Pancreas (tissue), 10 donors: ENCODE measurements at regions of chr17 and their contacts with region 1.

Region 1: GRCh38 chr17:78176548-78177025 is 8.2 kb downstream of the SYNGR2 start:
- DNase-seq: peak; percentile 63 to 89 (median 82)
- ATAC-seq: peak; percentile 22 to 44 (median 42)
- H3K4me3 ChIP-seq: no peak overlapping the region
- H3K27ac ChIP-seq: peak overlapping the region in 2 of 4 donors; percentile 83 to 86
- H3K4me1 ChIP-seq: peaks cover 20 to 56% (median 36%) of the 10 kb centered on the region in 3 donors
- H3K27me3 ChIP-seq: no peaks in the 10 kb centered on the region
- CTCF ChIP-seq: peak; percentile 73 to 92 (median 85)

Region 2: DNA sequence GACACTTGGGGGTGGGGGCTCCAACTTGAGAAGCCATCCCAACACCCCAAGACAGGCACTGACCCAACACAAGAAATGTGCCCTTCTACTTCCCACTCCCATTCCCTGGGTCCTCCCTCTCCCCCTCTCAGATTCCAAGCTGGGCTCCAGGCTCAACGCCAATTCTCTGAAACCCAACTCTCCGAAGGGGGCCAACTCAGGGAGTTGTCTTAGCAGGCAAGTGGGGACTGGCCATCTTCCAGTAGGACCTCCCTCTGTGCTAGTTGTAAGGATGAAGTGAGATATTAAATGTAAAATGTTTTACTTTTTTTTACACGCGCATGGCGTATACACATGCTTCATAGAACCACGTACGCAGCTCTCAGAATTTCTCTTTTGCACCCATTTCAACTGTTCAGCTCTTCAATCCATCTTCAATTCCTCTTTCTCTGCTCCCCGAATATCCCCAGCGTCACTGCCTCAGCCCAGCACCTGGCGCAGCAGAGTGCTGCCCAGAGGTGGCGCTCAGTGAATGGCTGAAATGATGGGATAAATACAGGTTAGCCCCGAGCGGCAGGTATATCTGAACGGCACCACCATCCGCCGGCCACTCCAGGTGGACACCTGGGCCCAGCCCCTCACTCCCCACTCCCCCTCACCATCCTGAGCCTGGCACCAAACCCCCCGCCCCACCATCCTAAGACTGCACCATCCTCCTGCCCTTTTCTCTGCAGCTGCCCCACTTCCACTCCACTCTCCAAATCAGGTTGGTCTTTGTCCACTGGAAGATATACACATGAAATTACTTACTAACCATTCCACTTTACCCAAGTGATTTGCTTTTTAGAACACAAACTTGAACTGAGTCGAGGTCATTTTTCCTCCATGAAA is 262.0 kb before region 1 on chr17:
- intact Hi-C with region 1: no loop called
- DNase-seq: peak in 1 of 6 donors; percentile 59
- ATAC-seq: peak; percentile 38 to 88 (median 74)
- H3K4me3 ChIP-seq: no peak overlapping the region
- H3K27ac ChIP-seq: no peak overlapping the region
- H3K4me1 ChIP-seq: peaks cover 0 to 10% (median 0%) of the 10 kb centered on the region in 3 donors
- H3K27me3 ChIP-seq: peaks cover 0 to 8% (median 0%) of the 10 kb centered on the region in 4 donors
- CTCF ChIP-seq: no peak

Region 3: GRCh38 chr17:78101112-78101511 is 75.5 kb before region 1 on chr17:
- intact Hi-C with region 1: no loop called
- DNase-seq: no peak
- ATAC-seq: no peak
- H3K4me3 ChIP-seq: no peak overlapping the region
- H3K27ac ChIP-seq: no peak overlapping the region
- H3K4me1 ChIP-seq: no peaks in the 10 kb centered on the region
- H3K27me3 ChIP-seq: no peaks in the 10 kb centered on the region
- CTCF ChIP-seq: no peak

Region 4: DNA sequence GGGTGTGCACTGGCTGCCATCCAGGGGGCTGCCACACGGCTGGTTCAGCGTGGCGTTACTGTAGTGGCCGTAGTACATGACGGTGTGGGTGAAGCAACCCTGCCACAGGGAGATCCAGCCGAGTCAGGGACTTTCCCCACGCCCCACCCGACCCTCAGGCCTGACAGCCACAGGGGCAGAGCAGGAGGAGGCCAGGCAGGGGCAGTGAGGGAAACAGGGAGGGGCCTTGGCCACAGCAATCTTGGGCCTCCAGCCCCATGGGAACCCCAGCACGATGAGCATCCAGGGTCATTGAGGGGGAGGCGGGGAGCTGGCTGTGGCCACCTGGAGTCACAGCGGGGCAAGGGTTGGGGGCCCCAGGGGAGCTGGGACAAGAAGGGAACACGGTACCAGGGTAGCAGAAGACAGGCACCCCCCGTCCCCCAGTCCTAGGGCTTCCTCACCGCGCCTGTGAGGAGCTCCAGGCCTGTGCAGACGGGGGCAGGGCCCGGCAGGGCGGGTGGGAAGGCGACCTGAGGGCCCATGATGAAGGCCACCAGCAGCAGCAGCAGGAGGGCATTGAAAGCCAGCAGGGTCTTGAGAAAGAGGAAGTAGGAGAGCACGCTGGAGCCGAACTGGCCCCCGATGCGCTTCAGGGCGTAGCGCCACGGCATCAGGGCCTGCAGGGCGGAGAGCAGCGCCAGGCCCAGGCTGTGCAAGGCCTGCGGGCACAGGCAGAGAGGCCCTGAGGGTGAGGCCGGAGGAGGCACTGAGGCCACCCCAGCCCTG is 52.3 kb before region 1 on chr17:
- intact Hi-C with region 1: loop called in 2 of 3 experiments (anchors 5 kb)
- DNase-seq: peak in 2 of 6 donors; percentile 56 to 73
- ATAC-seq: no peak
- H3K4me3 ChIP-seq: no peak overlapping the region
- H3K27ac ChIP-seq: no peak overlapping the region
- H3K4me1 ChIP-seq: peaks cover 0 to 3% (median 3%) of the 10 kb centered on the region in 3 donors
- H3K27me3 ChIP-seq: no peaks in the 10 kb centered on the region
- CTCF ChIP-seq: no peak